ENCODE measurements at regions of chr4 and their contacts with region 1.

Region 1: DNA sequence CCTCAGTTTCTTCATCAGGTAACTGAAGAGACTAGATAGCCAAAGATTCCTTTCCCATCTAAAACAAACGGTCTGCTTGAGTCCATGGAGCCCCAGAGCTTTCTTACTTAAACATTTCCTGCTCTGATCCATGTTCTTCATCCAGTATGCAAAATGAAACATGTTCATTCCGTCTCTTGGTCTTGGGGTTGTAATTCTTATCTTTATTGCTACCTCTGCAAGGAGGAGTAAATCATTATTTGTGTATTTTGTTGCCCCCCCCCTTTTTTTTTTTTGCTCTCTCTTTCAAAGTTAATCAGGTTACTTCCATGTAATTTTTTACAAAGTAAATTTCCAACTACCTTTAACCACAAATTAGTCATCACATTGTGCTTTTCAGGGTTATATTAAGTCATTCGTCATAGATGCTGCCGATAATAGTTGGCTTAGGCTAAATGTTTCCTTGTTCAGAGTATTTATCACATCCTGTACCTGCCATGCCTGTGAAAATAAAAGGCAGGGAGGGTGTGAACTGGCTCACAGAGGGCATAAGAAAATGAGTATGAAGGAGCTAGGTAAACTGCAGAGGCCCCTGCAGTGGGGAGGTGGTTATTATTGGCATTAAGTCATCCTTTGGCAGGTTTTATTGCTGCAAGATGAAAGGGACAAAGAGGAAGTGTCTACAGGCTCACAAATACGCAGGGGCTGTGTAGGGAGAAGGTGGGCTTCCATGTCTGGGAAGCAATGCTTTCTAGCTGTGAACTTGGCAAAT is 76.7 kb upstream of the HS3ST1 start:
- DNase-seq: peak; percentile 95
- ATAC-seq: peak; percentile 95
- H3K4me3 ChIP-seq: no peak overlapping the region
- H3K27ac ChIP-seq: peak overlapping the region; percentile 94
- H3K4me1 ChIP-seq: peaks cover 24% of the 10 kb centered on the region
- H3K27me3 ChIP-seq: no peaks in the 10 kb centered on the region
- CTCF ChIP-seq: no peak

Region 2: GRCh38 chr4:10811991-10812390 is 693.4 kb before region 1 on chr4:
- CTCF ChIA-PET with region 1: no interaction called
- POLR2A ChIA-PET with region 1: no interaction called
- intact Hi-C with region 1: no loop called
- DNase-seq: no peak
- ATAC-seq: no peak
- H3K4me3 ChIP-seq: no peak overlapping the region
- H3K27ac ChIP-seq: no peak overlapping the region
- H3K4me1 ChIP-seq: no peaks in the 10 kb centered on the region
- H3K27me3 ChIP-seq: no peaks in the 10 kb centered on the region
- CTCF ChIP-seq: no peak

Region 3: GRCh38 chr4:11428899-11429698 is 76.3 kb before region 1 on chr4:
- CTCF ChIA-PET with region 1: no interaction called
- POLR2A ChIA-PET with region 1: interaction called, 3 read pairs
- intact Hi-C with region 1: loop called (anchors 2 kb)
- DNase-seq: peak; percentile 86
- ATAC-seq: peak; percentile 90
- H3K4me3 ChIP-seq: peak overlapping the region; percentile 90
- H3K27ac ChIP-seq: peak overlapping the region; percentile 91
- H3K4me1 ChIP-seq: peaks cover 10% of the 10 kb centered on the region; the same call in 1 of the 2 replicates
- H3K27me3 ChIP-seq: no peaks in the 10 kb centered on the region
- CTCF ChIP-seq: peak; percentile 64

Region 4: DNA sequence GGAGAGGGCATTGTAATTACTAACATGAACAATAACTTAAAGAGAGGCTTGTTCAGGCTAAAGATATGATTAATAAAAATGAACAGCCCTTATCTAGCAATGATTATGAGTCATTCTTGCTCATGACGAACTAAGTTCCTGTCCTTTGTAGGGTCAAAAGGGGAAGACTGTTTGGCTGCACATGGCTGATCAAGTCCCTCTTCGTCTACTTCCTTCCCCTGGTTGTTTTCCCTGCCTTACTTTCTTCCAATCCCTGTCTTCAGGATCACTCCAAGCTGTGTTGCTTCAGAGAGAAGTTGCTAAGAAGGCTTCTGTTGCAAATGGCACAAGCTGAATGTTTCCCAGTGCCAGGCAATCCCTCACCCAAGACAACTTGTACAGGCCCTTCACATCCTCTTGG is 38.3 kb after region 1 on chr4:
- CTCF ChIA-PET with region 1: no interaction called
- POLR2A ChIA-PET with region 1: no interaction called
- intact Hi-C with region 1: loop called (anchors 1 kb)
- DNase-seq: peak; percentile 73
- ATAC-seq: peak; percentile 52
- H3K4me3 ChIP-seq: peak overlapping the region; percentile 25; the same call in 1 of the 2 replicates
- H3K27ac ChIP-seq: peak overlapping the region; percentile 99
- H3K4me1 ChIP-seq: peaks cover 38% of the 10 kb centered on the region
- H3K27me3 ChIP-seq: no peaks in the 10 kb centered on the region
- CTCF ChIP-seq: no peak

Region 5: GRCh38 chr4:11585506-11585905 is 80.1 kb after region 1 on chr4:
- CTCF ChIA-PET with region 1: no interaction called
- POLR2A ChIA-PET with region 1: no interaction called
- intact Hi-C with region 1: loop called (anchors 1 kb)
- DNase-seq: peak; percentile 79
- ATAC-seq: peak; percentile 97
- H3K4me3 ChIP-seq: no peak overlapping the region
- H3K27ac ChIP-seq: peak overlapping the region; percentile 65
- H3K4me1 ChIP-seq: peaks cover 25% of the 10 kb centered on the region
- H3K27me3 ChIP-seq: no peaks in the 10 kb centered on the region
- CTCF ChIP-seq: no peak

Region 6: DNA sequence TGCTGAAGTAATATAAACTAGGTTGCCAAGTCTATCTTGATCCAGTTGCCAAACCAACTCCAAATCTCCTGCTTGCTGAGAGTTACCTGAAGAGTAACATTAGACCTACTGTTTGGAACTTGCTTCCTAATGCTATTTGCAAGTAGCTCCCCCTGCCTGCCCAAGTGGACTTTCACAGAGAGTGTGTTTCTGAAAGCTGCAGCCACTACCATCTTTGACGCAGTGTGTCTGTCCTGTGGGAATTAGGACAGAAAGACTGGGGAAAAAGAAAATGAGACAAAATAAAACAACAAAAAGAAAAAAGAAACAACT is 118.3 kb after region 1 on chr4:
- CTCF ChIA-PET with region 1: interaction called, 4 read pairs
- POLR2A ChIA-PET with region 1: no interaction called
- intact Hi-C with region 1: loop called (anchors 2 kb)
- DNase-seq: peak; percentile 63
- ATAC-seq: peak; percentile 84
- H3K4me3 ChIP-seq: no peak overlapping the region
- H3K27ac ChIP-seq: peak overlapping the region; percentile 82
- H3K4me1 ChIP-seq: peaks cover 58% of the 10 kb centered on the region
- H3K27me3 ChIP-seq: no peaks in the 10 kb centered on the region
- CTCF ChIP-seq: peak; percentile 69

Region 7: GRCh38 chr4:11635359-11636072 is 130.1 kb after region 1 on chr4:
- CTCF ChIA-PET with region 1: no interaction called
- POLR2A ChIA-PET with region 1: interaction called, 10 read pairs
- intact Hi-C with region 1: no loop called
- DNase-seq: peak; percentile 89
- ATAC-seq: peak; percentile 65
- H3K4me3 ChIP-seq: no peak overlapping the region
- H3K27ac ChIP-seq: peak overlapping the region; percentile 98
- H3K4me1 ChIP-seq: peaks cover 62% of the 10 kb centered on the region
- H3K27me3 ChIP-seq: no peaks in the 10 kb centered on the region
- CTCF ChIP-seq: no peak